Sciatic nerve (tissue), 2 donors: ENCODE measurements at regions of chr13 and their contacts with region 1.

Region 1: DNA sequence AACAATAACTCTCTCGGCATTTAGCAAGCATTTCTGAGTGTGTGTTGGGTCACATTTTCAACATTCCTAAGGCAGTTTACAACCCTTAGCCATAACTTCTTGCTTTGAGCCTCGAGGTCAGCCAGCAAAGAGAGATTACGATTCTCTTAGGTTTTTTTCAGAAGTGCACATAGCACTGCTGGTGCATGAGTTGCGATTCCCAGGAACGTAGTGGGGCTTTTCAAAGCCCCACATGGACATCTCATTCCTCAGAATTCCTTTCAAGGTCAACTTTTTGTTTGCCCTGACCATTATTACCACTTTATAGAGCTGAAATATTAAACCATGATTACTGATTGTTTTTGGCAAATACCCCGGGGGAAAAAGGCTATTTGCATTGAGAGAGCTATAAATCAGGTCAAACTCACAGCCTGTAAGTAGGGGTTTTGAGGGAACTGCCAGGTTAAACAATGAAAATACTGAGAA is 705.3 kb downstream of the GPC5 start:
- DNase-seq: no peak
- ATAC-seq: peak; percentile 57

Region 2: DNA sequence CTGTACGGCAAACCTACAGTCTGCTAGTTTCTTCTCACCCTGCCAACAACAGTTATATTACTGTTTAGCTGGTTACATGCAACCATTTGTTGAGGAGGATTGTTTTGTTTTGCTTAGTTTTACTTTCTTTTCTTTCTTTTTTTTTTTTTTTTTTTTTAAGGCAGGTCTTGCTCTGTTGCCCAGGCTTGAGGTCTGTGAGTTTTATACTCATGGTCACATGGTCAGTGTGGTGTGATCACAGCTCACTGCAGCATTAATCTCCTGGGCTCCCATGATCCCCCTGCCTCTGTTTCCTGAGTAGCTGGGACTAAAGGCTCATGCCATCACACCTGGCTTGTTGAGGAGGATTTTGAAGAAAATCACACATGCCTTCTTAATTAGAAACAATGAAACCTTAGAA is 199.7 kb before region 1 on chr13:
- intact Hi-C with region 1: loop called (anchors 10 kb)
- DNase-seq: no peak
- ATAC-seq: no peak